ENCODE measurements at regions of chr1 and their contacts with region 1.

Region 1: GRCh38 chr1:224113918-224114786 is at the start of gene FBXO28:
- DNase-seq: peak; percentile 97
- ATAC-seq: peak; percentile 98
- H3K4me3 Mint-ChIP-seq: peak within 1 kb of the TSS; percentile 80
- H3K27ac Mint-ChIP-seq: peak within 1 kb of the TSS; percentile 84
- H3K4me1 Mint-ChIP-seq: peaks cover 27% of the 10 kb centered on the region
- H3K27me3 Mint-ChIP-seq: peaks cover 2% of the 10 kb centered on the region
- CTCF ChIP-seq: no peak
- total RNA-seq, gene FBXO28: 21.5 to 21.7 TPM

Region 2: DNA sequence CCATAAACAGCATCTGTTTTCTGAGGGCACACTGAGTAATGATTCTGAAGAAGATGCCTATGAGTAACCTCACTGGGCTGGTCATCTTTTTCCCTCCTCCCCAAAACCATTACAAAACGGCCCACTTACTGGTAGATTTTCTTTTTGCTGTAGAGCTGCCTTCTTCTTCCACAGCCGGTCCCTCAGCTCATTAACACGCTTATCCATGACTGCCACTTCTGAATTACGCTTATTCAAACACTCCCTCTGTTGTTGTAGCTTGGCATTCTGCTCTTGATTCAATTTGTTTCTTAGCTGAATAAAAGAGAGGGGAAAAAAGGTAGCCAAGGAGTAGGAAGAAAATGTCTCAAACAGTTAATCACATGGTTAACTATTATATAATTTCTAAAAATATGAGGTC is 311.6 kb before region 1 on chr1:
- CTCF ChIA-PET with region 1: no interaction called
- POLR2A ChIA-PET with region 1: no interaction called
- intact Hi-C with region 1: no loop called
- DNase-seq: no peak
- ATAC-seq: no peak
- H3K4me3 Mint-ChIP-seq: no peak overlapping the region
- H3K27ac Mint-ChIP-seq: no peak overlapping the region
- H3K4me1 Mint-ChIP-seq: no peaks in the 10 kb centered on the region
- H3K27me3 Mint-ChIP-seq: no peaks in the 10 kb centered on the region
- CTCF ChIP-seq: no peak

Region 3: GRCh38 chr1:224182866-224183590 is 68.9 kb after region 1 on chr1 and contains the start of gene DEGS1:
- CTCF ChIA-PET with region 1: interaction called, 3 read pairs
- POLR2A ChIA-PET with region 1: interaction called, 3 read pairs
- intact Hi-C with region 1: loop called (anchors 10 kb)
- DNase-seq: peak; percentile 85
- ATAC-seq: peak; percentile 73
- H3K4me3 Mint-ChIP-seq: peak within 1 kb of the TSS; percentile 94
- H3K27ac Mint-ChIP-seq: peak within 1 kb of the TSS; percentile 89
- H3K4me1 Mint-ChIP-seq: peaks cover 41% of the 10 kb centered on the region
- H3K27me3 Mint-ChIP-seq: no peaks in the 10 kb centered on the region
- CTCF ChIP-seq: no peak
- total RNA-seq, gene DEGS1: 32.3 to 33.8 TPM

Region 4: DNA sequence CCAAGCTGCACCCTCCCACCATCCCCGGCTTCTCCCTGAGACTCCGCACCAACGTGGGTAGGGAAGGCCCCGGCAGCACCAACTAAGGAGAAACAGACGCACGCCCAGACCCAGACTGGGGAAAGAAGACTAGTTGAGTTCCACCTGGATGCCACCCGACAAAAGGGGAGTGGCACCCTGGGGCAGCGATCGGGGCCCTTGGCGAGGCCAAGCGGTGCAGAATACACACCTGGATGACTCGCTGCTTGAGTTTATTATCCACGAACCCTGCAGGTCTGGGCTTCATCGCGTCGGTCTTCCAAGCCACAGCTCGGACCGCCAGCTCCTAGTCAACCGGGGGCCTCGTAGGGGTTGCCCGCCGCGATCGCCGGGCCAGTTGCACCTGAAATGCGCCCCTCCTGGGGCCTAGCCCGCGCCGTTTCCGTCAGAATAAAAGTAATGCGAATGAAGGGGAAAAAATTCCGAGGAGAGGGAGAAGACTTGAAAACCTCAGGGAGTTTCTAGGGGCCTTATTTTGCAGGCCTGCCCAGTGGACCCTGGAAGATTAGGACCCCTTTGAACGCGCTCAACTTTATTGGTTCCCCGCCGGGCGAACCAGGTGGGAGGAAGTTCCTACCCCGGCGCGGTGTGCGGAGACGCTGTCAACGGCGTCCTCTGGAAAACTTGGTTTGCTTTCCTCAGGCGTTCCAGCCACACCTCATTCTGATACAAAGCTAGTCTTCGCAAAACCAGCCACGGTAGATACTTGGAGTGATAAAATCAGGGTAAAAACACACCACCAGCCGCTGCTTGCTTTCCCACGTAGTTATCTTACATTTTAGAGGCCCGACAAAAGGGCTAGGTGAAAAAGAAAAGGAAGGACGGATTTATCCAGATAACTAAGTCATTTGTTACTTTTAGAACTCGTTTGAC is 215.9 kb after region 1 on chr1 and contains the start of gene NVL:
- CTCF ChIA-PET with region 1: interaction called, 33 read pairs
- POLR2A ChIA-PET with region 1: interaction called, 5 read pairs
- intact Hi-C with region 1: loop called (anchors 1 kb)
- DNase-seq: peak; percentile 85
- ATAC-seq: peak; percentile 88
- H3K4me3 Mint-ChIP-seq: peak within 1 kb of the TSS; percentile 88
- H3K27ac Mint-ChIP-seq: peak within 1 kb of the TSS; percentile 99
- H3K4me1 Mint-ChIP-seq: peaks cover 40% of the 10 kb centered on the region
- H3K27me3 Mint-ChIP-seq: no peaks in the 10 kb centered on the region
- CTCF ChIP-seq: no peak
- total RNA-seq, gene NVL: 37.7 to 40.4 TPM